Mucosa of descending colon (tissue), 3 donors: ENCODE measurements at regions of chr6 and their contacts with region 1.

Region 1: GRCh38 chr6:156776840-156777576 is at the start of gene ARID1B:
- DNase-seq: peak; percentile 83 to 90 (median 88)
- ATAC-seq: peak; percentile 71
- H3K4me3 ChIP-seq: peak within 1 kb of the TSS; percentile 83
- H3K4me1 ChIP-seq: peaks cover 24% of the 10 kb centered on the region
- CTCF ChIP-seq: no peak
- total RNA-seq, gene ARID1B: 71.8 to 102 (median 101) TPM

Region 2: DNA sequence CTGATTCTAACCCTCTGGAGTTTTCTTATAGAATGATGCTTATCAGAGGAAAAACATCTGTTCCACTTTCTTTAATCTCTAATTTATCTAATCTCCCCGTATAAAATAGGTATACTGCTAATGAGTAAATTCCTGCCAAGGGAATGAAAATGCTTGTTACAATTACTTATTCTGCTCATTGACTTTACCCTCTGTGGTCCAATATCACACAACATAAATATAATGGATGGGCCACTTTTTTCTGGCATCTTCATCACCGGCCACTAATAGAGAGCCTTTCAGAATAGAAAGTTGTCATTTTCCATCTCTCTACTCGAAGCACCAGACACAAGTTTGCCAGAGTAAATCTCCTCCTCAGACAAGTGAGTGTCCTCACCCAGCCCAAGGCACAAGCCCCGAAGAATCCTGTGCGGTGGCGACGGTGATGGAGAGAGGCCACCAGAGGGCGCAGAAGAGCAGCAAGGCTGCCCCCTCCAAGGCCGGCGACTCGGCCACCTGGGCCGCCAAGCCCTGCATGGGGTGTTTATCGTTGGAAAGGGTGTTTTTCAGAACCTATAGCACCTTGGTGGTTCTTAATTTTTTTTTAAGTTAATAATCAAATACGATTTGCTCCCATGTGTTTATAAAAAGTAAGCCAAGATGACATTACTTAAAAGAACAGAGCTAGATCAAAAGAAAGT is 212.7 kb before region 1 on chr6:
- intact Hi-C with region 1: loop called in 1 of 2 experiments (anchors 10 kb)
- DNase-seq: peak; percentile 74 to 87 (median 86)
- ATAC-seq: peak; percentile 98
- H3K4me3 ChIP-seq: no peak overlapping the region
- H3K4me1 ChIP-seq: no peaks in the 10 kb centered on the region
- CTCF ChIP-seq: peak; percentile 90

Region 3: DNA sequence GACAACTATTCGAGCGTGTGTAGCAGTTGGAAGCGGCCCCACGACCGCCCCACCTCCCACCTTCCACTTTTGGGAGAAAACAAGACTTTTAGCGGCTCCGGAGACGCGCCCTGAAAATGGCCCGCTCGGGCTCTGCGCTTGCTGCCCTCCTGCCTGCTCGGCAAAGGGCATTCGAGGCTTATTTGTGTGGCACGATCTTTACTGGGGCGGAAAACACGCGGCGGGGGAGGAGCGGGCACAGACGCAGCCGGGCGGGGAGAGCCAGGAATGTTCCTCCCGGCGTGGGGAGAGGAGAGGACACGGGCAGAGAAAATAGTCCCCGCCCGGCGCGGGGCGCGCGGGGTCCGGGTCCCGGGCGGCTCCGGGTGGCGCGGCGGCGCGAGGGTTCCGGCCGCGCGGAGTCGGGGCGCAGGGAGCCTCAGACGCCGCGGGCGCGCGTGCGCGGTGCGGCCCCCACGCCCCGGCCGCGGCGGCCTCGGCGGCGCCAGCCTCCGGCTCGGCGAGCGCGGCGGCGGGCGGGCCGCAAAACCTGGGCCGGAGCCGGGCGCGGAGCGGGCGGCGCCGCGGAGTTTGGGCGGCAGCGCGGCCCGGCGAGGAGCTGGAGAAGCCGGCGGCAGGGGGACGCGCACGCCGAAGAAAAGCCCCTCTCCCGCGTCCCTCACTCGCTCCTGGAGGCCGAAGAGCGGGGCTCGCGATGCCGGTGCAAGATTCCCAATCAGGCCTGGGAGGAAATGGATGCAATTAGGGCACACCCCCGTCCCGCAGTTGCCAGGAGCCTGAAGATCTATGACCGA is 89.8 kb before region 1 on chr6:
- intact Hi-C with region 1: loop called (anchors 2 to 5 kb)
- DNase-seq: peak; percentile 87 to 93 (median 90)
- ATAC-seq: peak; percentile 89
- H3K4me3 ChIP-seq: peak overlapping the region; percentile 38
- H3K4me1 ChIP-seq: peaks cover 10% of the 10 kb centered on the region
- CTCF ChIP-seq: no peak

Region 4: DNA sequence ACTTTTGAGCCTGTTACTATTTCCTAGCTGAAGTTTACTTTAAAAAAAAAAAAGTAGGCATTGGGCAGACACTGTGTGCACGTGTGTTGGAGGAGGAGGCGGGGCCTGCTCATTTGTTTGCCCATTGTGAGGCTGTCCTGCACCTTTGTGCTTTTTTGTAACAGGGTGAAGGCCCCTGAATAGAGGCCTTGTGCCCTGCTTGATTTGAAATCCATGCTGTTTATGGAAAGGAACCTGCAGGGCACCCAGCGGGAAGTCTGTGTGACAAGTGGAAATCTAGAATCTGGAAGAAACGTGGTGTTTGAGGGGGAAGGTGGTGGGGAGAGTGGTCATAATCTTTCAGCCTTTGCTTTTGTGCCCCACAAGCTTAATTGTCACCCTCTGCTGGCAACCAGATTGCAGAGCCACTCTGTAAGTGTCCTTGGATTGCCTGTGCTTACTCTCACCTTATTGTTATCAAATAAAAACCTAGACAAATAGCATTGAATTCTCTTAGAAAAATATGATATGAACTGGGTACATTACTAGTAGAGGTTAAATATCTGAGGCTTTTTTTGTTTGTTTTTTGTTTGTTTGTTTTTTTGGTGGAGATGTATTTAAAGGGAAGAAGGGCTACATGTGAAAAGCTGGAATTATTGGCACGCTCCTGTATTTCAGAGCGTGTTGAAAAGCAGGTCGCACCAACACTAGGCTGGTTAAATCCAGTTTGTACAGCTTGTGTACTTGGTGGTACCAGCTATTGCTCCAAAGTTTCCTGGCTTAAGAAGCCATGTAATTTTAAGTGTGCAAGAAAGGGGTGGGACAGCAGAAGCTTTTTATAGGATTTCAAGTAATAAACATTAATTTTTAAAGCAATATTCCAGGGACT is 156.4 kb after region 1 on chr6:
- intact Hi-C with region 1: loop called in 1 of 2 experiments (anchors 10 kb)
- DNase-seq: peak; percentile 76 to 85 (median 77)
- ATAC-seq: peak; percentile 91
- H3K4me3 ChIP-seq: no peak overlapping the region
- H3K4me1 ChIP-seq: peaks cover 18% of the 10 kb centered on the region
- CTCF ChIP-seq: no peak